AG04450 (cell line): ENCODE measurements at regions of chr5 and their contacts with region 1.

Region 1: DNA sequence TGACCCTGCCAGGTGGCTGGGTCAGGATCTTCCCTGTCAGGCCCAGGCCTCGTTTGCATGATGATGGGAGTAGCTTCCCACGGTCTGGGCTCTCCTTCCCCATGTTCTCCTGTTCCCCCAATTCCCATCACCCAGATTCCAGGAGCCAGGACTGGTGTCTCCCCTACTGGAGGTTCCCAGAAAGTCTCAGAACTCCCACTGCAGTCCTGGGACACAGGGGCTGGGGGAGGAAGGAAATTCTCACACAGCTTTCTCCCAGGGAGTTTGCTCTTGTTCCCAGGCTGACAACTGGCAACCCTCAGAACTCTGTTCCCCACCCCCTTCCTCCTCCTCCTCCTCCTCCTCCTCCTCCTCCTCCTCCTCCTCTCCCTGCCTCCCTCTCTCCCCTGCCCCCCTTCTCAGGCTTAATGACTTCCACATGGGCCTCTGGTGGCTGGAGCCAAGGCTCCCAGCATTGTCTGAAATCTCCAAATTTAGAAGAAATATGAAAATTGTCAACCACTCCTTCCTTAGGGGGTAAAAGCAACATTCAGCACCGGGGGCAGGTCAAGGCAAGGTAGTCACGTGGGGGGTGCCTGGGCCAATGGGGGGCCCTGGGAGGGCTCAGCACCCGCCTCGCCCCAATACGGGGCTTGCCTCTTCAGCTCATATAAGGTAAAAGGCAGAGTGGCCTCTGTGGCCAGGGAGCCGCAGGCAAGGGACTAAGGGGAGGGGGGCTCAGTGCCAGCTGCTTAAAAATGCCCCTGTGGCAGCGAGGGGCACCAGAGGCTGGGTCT is 27.3 kb upstream of the IL17B start:
- DNase-seq: peak; percentile 88
- H3K4me3 ChIP-seq: peak overlapping the region; percentile 75
- H3K27ac ChIP-seq: peak overlapping the region; percentile 95
- H3K27me3 ChIP-seq: no peaks in the 10 kb centered on the region
- CTCF ChIP-seq: peak; percentile 34

Region 2: GRCh38 chr5:149387081-149387631 is 19.2 kb before region 1 on chr5:
- CTCF ChIA-PET with region 1: interaction called, 16 read pairs
- POLR2A ChIA-PET with region 1: interaction called, 42 read pairs
- DNase-seq: no peak
- H3K4me3 ChIP-seq: no peak overlapping the region
- H3K27ac ChIP-seq: peak overlapping the region; percentile 40
- H3K27me3 ChIP-seq: no peaks in the 10 kb centered on the region
- CTCF ChIP-seq: no peak

Region 3: DNA sequence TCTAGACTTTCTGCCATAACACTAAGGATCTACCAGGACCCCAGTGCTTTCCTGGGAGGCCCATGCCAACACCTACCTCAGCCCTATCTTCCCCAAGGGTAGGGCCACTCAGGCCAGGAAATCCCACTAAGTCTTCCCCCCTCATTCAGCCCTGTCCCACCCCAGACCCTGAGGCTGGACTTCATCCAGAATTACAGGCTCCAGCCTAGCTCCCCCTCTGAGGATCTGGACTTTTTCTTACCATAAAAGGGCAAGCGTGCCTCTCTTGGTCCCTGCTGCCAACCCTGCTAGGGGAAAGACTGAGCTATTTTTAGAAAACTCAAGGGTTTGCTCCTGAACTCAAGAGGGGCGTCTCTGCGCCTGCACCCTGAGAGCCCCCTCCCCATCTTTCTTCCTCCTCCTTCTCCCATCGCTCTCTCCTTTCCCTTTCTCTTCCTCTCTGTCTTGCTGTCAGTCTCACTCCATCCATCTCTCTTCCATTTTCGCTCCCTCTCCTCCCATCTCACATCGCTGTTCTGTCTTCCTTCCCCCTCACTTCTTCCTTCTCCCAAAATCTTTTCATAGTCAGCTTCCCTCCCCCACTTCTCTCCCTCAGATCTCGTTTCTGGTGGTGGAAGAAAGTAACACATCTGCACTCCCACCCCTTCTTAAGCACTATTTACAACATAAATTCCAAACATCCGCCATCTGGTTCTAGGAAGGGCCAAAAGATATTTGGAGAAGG is 10.8 kb after region 1 on chr5:
- CTCF ChIA-PET with region 1: interaction called, 3 read pairs
- POLR2A ChIA-PET with region 1: interaction called, 95 read pairs
- DNase-seq: peak; percentile 89
- H3K4me3 ChIP-seq: peak overlapping the region; percentile 25
- H3K27ac ChIP-seq: peak overlapping the region; percentile 98
- H3K27me3 ChIP-seq: no peaks in the 10 kb centered on the region
- CTCF ChIP-seq: no peak

Region 4: GRCh38 chr5:149422366-149423048 is 16.1 kb after region 1 on chr5:
- CTCF ChIA-PET with region 1: interaction called, 3 read pairs
- POLR2A ChIA-PET with region 1: interaction called, 95 read pairs
- DNase-seq: peak; percentile 95
- H3K4me3 ChIP-seq: peak overlapping the region; percentile 11
- H3K27ac ChIP-seq: peak overlapping the region; percentile 95
- H3K27me3 ChIP-seq: no peaks in the 10 kb centered on the region
- CTCF ChIP-seq: no peak